WTC11 (cell line): ENCODE measurements at regions of chr12 and their contacts with region 1.

Region 1: DNA sequence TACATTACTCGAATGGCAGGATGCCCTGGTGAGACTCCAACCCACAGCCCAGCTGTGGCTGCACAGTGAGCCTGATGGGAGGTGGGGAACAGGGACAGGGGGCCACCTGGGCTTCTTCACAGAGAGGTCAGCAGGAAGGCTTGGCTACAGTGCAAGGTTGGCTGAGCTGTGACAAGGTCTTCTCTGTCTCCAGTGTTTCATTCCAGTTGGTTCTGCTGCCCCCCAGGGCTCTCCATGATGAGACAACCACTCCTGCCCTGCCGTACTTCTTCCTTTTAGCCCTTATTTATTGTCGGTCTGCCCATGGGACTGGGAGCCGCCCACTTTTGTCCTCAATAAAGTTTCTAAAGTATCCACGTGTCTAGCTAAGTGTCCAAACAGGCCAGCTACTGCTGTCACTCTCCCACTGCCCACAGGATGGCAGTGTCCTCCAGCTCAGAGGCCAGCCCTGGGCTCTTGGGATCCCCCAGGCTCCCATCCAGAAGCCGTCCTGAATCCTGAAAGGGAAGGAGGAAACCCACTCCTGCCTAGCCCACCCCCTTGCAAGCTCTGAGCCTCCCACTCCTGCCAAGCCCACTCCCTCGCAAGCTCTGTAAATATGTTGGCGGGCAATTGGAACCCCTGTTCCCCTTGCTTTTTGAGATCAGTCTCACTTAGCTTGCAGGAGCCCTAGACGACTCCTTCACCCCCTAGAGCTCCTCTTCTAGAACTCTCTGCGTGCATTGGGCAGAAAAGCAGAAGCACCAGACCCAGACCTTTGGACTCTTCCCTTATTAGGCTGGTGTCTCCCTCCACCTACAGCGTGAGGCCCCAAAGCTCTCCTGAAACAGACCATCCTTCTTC is 5.4 kb downstream of the C1QL4 start:
- DNase-seq: peak; percentile 77
- ATAC-seq: peak; percentile 76
- H3K4me3 Mint-ChIP-seq: peak overlapping the region; percentile 77; the same call in 1 of the 2 replicates
- H3K27ac Mint-ChIP-seq: no peak overlapping the region
- H3K4me1 Mint-ChIP-seq: peaks cover 20% of the 10 kb centered on the region
- H3K27me3 Mint-ChIP-seq: peaks cover 52% of the 10 kb centered on the region
- CTCF ChIP-seq: peak; percentile 42; the same call in 1 of the 2 replicates

Region 2: DNA sequence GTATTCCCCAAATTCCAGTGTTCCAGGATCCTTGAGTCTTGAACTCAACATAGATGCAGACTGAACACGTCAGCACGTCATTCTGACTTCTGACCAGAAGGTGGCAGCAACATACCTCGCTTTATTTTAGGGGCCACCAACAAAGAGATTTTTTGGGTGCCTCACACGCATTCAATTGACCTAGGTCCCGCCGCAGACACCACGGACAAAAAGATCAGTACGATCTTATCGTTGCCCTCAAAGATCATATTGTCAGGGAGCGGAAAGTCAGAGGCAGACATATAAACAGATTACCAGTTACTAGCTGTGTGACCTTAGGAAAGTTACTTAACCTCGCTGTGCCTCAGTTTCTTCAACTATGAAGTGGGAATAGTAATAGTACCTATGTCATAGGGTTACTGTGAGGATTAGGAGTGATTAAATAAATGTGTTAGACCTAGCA is 43.2 kb before region 1 on chr12:
- CTCF ChIA-PET with region 1: interaction called, 122 read pairs
- POLR2A ChIA-PET with region 1: no interaction called
- DNase-seq: peak; percentile 76
- ATAC-seq: peak; percentile 48
- H3K4me3 Mint-ChIP-seq: no peak overlapping the region
- H3K27ac Mint-ChIP-seq: no peak overlapping the region
- H3K4me1 Mint-ChIP-seq: peaks cover 17% of the 10 kb centered on the region
- H3K27me3 Mint-ChIP-seq: peaks cover 59% of the 10 kb centered on the region
- CTCF ChIP-seq: peak; percentile 80

Region 3: GRCh38 chr12:49515266-49515665 is 183.7 kb after region 1 on chr12:
- CTCF ChIA-PET with region 1: interaction called, 24 read pairs
- POLR2A ChIA-PET with region 1: no interaction called
- DNase-seq: no peak
- ATAC-seq: no peak
- H3K4me3 Mint-ChIP-seq: no peak overlapping the region
- H3K27ac Mint-ChIP-seq: no peak overlapping the region; the same call in 1 of the 2 replicates
- H3K4me1 Mint-ChIP-seq: no peaks in the 10 kb centered on the region
- H3K27me3 Mint-ChIP-seq: no peaks in the 10 kb centered on the region
- CTCF ChIP-seq: no peak